Activated T-helper 1 cell treated with anti-CD3 and anti-CD28 coated beads, Interleukin-12 subunit alpha, Interleukin-12 subunit beta, Interleukin-2, Interleukin-4 antibody, amounts not matched to agents 30 ng/mL and 10 ng/mL and 1 ng/mL, durations not matched to agents 14 hours and 24 hours and 36 hours (primary cell): ENCODE measurements at regions of chr4 and their contacts with region 1.

Region 1: DNA sequence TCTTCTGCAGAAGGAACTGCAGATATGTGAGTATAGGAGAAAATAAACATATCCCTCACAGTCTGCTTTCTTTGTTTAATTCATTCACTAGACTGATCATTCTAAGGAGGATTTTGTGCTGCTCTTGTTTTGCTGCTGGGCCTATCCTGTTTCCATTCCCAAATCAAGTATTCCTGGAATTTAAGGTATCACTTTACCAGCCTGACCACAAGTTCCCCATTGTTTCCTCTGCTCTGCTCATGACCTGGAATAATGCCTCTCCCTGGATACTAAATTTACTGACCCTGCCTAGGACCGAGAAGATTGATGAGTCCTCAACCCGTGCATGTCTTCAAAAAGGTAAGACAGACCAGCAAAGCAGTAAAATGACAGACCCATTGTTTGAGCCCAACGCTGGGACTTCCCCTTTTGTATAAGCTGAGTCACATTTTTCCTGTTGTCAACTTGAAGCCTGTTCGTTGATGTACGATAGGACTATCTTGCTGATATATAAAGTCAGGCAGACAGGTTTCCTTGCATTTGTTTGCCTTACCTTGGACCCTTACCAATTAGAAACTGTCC is 85.5 kb upstream of the TET2 start:
- DNase-seq: peak; percentile 35
- H3K4me3 Mint-ChIP-seq: peak overlapping the region; percentile 17
- H3K27ac Mint-ChIP-seq: peak overlapping the region; percentile 93
- H3K4me1 Mint-ChIP-seq: peaks cover 55% of the 10 kb centered on the region
- H3K27me3 Mint-ChIP-seq: no peaks in the 10 kb centered on the region

Region 2: GRCh38 chr4:104896660-104897645 is 164.3 kb before region 1 on chr4:
- intact Hi-C with region 1: loop called (anchors 1 kb)
- DNase-seq: no peak
- H3K4me3 Mint-ChIP-seq: no peak overlapping the region
- H3K27ac Mint-ChIP-seq: no peak overlapping the region
- H3K4me1 Mint-ChIP-seq: peaks cover 11% of the 10 kb centered on the region
- H3K27me3 Mint-ChIP-seq: no peaks in the 10 kb centered on the region

Region 3: DNA sequence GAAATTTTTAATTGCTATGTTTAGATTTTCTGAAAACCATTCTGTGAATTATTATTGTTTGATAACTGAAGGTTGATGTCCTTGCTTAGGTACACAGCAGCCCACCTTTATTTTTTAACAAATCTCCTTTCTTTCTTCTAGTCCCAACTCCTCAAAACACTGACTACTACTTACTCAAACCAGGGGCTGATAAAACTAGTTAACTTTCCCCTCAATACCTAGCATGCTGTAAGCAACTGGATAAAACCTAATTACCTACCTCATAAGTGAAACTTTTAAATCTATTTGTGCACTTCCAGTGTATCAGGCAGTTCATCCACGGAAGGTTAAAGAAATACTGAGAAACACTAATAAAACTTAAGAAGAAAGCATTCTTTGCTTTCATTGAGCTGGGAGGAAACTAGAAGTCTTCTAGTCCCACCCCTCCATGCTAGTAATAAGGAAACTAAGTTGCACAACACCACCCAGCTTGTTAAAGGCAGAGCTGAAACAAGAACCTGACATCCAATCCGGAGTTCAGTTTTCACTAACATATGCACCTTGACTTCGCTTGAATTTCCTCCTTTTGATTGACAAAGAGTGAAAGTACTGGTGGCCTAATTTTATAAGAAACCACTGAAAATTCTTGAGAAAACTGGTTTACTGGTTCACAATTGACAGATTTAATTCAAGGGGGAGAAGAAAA is 94.7 kb before region 1 on chr4:
- intact Hi-C with region 1: loop called (anchors 1 kb)
- DNase-seq: peak; percentile 42
- H3K4me3 Mint-ChIP-seq: peak overlapping the region; percentile 63
- H3K27ac Mint-ChIP-seq: peak overlapping the region; percentile 91
- H3K4me1 Mint-ChIP-seq: peaks cover 17% of the 10 kb centered on the region
- H3K27me3 Mint-ChIP-seq: peaks cover 5% of the 10 kb centered on the region

Region 4: GRCh38 chr4:105146276-105147015 is 85.2 kb after region 1 on chr4 and contains the start of gene TET2:
- intact Hi-C with region 1: loop called (anchors 1 kb)
- DNase-seq: peak; percentile 77
- H3K4me3 Mint-ChIP-seq: peak within 1 kb of the TSS; percentile 95
- H3K27ac Mint-ChIP-seq: peak within 1 kb of the TSS; percentile 98
- H3K4me1 Mint-ChIP-seq: peaks cover 50% of the 10 kb centered on the region
- H3K27me3 Mint-ChIP-seq: no peaks in the 10 kb centered on the region
- total RNA-seq, gene TET2: 28.7 and 28.8 TPM in 2 replicates

Region 5: DNA sequence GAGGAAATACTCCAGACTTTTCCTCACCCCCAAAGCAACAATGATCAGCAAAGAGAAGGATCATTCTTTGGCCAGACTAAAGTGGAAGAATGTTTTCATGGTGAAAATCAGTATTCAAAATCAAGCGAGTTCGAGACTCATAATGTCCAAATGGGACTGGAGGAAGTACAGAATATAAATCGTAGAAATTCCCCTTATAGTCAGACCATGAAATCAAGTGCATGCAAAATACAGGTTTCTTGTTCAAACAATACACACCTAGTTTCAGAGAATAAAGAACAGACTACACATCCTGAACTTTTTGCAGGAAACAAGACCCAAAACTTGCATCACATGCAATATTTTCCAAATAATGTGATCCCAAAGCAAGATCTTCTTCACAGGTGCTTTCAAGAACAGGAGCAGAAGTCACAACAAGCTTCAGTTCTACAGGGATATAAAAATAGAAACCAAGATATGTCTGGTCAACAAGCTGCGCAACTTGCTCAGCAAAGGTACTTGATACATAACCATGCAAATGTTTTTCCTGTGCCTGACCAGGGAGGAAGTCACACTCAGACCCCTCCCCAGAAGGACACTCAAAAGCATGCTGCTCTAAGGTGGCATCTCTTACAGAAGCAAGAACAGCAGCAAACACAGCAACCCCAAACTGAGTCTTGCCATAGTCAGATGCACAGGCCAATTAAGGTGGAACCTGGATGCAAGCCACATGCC is 175.1 kb after region 1 on chr4:
- intact Hi-C with region 1: no loop called
- DNase-seq: no peak
- H3K4me3 Mint-ChIP-seq: no peak overlapping the region
- H3K27ac Mint-ChIP-seq: peak overlapping the region; percentile 30
- H3K4me1 Mint-ChIP-seq: peaks cover 23% of the 10 kb centered on the region
- H3K27me3 Mint-ChIP-seq: no peaks in the 10 kb centered on the region

Region 6: GRCh38 chr4:105306158-105306781 is 245.1 kb after region 1 on chr4:
- intact Hi-C with region 1: loop called (anchors 1 kb)
- DNase-seq: peak; percentile 60
- H3K4me3 Mint-ChIP-seq: peak overlapping the region; percentile 41
- H3K27ac Mint-ChIP-seq: peak overlapping the region; percentile 92
- H3K4me1 Mint-ChIP-seq: peaks cover 25% of the 10 kb centered on the region
- H3K27me3 Mint-ChIP-seq: no peaks in the 10 kb centered on the region

Region 7: GRCh38 chr4:105708530-105709391 is 647.5 kb after region 1 on chr4 and contains the starts of genes GSTCD and INTS12:
- intact Hi-C with region 1: loop called (anchors 5 kb)
- DNase-seq: peak; percentile 83
- H3K4me3 Mint-ChIP-seq: peak within 1 kb of the TSS; percentile 99
- H3K27ac Mint-ChIP-seq: peak within 1 kb of the TSS; percentile 95
- H3K4me1 Mint-ChIP-seq: peaks cover 21% of the 10 kb centered on the region
- H3K27me3 Mint-ChIP-seq: no peaks in the 10 kb centered on the region
- total RNA-seq, gene GSTCD: 17.0 and 20.9 TPM in 2 replicates
- total RNA-seq, gene INTS12: 18.7 and 22.4 TPM in 2 replicates